Endothelial cell of umbilical vein (primary cell): ENCODE measurements at regions of chr1 and their contacts with region 1.

Region 1: DNA sequence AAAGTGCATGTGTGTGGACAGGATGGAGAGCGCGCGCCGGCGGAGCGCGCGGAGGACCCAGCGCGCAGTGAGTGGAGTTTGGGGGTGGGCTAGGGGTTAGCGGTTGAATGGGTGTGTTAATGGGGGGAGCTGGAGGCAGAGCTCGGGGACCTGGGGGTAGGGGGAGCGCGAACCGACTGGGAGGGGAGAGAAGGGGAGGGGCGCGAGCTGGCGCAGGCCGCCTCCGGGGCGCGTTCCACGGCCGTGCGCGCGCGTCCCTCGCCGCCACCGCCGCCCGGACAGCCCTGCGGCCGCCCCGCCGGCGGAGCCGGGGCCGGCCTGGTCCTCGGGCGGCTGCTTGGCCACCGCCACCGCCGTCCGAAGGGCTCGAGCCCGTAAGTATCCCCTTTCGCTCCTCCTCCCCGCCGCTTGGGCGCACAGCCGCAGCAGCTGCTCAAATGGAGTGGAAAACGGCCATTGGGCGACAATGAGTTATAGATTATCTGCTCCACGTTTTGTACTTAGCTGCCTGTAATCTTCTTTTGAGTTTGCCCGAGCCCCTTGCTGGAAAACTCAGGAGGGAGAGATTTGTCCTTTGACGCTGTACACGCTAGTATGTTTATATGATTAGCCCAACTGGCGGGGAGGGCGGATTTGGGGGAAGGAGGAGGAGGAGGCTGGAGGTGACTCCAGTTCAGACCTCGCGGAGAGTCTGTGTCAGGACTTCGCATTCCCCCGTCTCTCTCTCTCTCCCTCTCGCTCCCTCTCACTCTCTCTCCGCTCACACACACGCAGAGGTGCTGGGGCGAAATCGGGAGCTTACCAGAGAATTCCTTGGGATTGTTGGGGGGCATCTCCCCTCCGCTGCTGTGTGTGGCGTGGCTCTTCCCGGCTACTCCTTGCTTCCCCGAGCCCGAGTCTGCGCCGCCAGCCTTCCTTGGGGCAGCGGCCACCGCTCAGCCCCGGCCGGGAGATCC is at the start of gene ADGRL2:
- DNase-seq: peak; percentile 91
- H3K4me3 ChIP-seq: peak within 1 kb of the TSS; percentile 71 to 99 (median 89)
- H3K27ac ChIP-seq: peak within 1 kb of the TSS; percentile 79
- H3K4me1 ChIP-seq: peaks cover 10% of the 10 kb centered on the region
- H3K27me3 ChIP-seq: no peaks in the 10 kb centered on the region
- CTCF ChIP-seq: no peak
- POLR2A ChIP-seq: no peak
- total RNA-seq, gene ADGRL2: 40.0 and 46.1 TPM in 2 replicates

Region 2: DNA sequence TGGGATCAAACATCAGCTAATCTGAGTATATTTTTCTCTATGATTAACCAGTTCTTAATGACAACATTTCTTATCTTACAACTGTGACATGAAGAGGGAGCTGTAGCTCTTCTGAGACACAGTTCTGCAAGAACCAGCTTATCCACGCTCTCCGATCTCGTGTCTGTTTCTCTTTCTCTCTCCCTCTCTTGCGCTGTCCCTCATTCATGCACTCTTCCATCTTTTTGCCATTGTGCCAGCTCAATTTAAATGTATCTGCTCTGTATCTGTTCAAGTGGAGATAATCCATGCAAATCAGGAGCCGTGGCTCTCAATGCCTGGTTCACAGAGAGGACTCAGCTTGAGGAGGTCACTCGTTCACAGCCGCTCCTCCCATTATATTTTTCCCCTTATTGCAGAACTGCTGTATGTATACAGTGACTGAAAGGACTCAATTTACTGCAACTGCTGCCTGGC is 494.9 kb before region 1 on chr1:
- CTCF ChIA-PET with region 1: interaction called, 9 read pairs
- POLR2A ChIA-PET with region 1: no interaction called
- dilution Hi-C with region 1: no loop called
- intact Hi-C with region 1: loop called (anchors 1 kb)
- DNase-seq: peak; percentile 65
- H3K4me3 ChIP-seq: peak overlapping the region; percentile 42 to 75 (median 47)
- H3K27ac ChIP-seq: no peak overlapping the region
- H3K4me1 ChIP-seq: no peaks in the 10 kb centered on the region
- H3K27me3 ChIP-seq: peaks cover 0 to 4% of the 10 kb centered on the region in 2 experiments
- CTCF ChIP-seq: peak; percentile 15 to 28
- POLR2A ChIP-seq: no peak

Region 3: DNA sequence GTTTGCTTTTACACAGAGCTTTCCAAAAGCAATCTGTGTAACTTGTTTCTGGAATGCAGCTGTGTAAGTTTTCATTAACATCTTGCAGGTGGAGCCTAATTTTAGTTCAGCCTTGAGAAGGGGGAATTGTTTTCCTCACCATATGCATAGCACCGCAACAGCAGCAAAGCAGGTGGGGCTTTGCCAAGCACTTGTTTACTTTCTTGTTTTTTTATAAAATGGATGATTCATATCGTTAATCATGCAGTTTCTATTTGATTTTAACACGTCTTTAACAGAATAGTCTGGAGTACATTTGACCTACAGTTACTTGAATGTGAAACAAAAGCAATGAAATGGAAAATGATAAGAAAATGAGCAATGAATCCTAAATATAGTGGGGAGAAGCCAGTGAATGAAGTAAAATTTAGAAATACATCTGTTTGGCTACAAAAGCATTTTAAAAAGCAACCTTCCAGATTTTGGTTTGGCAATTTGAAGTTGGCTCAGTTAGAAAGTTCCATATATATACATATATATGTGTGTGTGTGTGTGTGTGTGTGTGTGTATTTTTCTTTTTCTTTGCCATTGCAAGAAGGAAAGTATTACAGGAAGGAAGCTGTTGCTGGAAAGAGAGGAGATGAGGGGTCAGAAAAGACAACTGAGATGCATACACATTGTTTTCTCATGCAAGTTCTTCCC is 119.2 kb before region 1 on chr1:
- CTCF ChIA-PET with region 1: interaction called, 3 read pairs
- POLR2A ChIA-PET with region 1: no interaction called
- dilution Hi-C with region 1: no loop called
- intact Hi-C with region 1: loop called (anchors 1 kb)
- DNase-seq: peak; percentile 92
- H3K4me3 ChIP-seq: peak overlapping the region in 1 of 3 experiments; percentile 34
- H3K27ac ChIP-seq: peak overlapping the region; percentile 50
- H3K4me1 ChIP-seq: peaks cover 24% of the 10 kb centered on the region
- H3K27me3 ChIP-seq: no peaks in the 10 kb centered on the region
- CTCF ChIP-seq: no peak
- POLR2A ChIP-seq: no peak

Region 4: GRCh38 chr1:81998165-81998564 is 197.2 kb after region 1 on chr1:
- CTCF ChIA-PET with region 1: interaction called, 4 read pairs
- POLR2A ChIA-PET with region 1: no interaction called
- dilution Hi-C with region 1: no loop called
- intact Hi-C with region 1: loop called (anchors 5 kb)
- DNase-seq: no peak
- H3K4me3 ChIP-seq: no peak overlapping the region
- H3K27ac ChIP-seq: no peak overlapping the region
- H3K4me1 ChIP-seq: no peaks in the 10 kb centered on the region
- H3K27me3 ChIP-seq: no peaks in the 10 kb centered on the region
- CTCF ChIP-seq: no peak
- POLR2A ChIP-seq: no peak

Region 5: GRCh38 chr1:82185084-82185483 is 384.1 kb after region 1 on chr1:
- CTCF ChIA-PET with region 1: no interaction called
- POLR2A ChIA-PET with region 1: no interaction called
- dilution Hi-C with region 1: no loop called
- intact Hi-C with region 1: no loop called
- DNase-seq: no peak
- H3K4me3 ChIP-seq: no peak overlapping the region
- H3K27ac ChIP-seq: no peak overlapping the region
- H3K4me1 ChIP-seq: no peaks in the 10 kb centered on the region
- H3K27me3 ChIP-seq: no peaks in the 10 kb centered on the region
- CTCF ChIP-seq: no peak
- POLR2A ChIP-seq: no peak

Region 6: GRCh38 chr1:82704393-82704792 is 903.4 kb after region 1 on chr1:
- CTCF ChIA-PET with region 1: no interaction called
- POLR2A ChIA-PET with region 1: no interaction called
- dilution Hi-C with region 1: no loop called
- intact Hi-C with region 1: loop called (anchors 1 kb)
- DNase-seq: peak; percentile 98
- H3K4me3 ChIP-seq: no peak overlapping the region
- H3K27ac ChIP-seq: peak overlapping the region; percentile 77
- H3K4me1 ChIP-seq: peaks cover 30% of the 10 kb centered on the region
- H3K27me3 ChIP-seq: no peaks in the 10 kb centered on the region
- CTCF ChIP-seq: no peak
- POLR2A ChIP-seq: peak; percentile 80

Region 7: GRCh38 chr1:82920418-82921248 is 1119.7 kb after region 1 on chr1:
- CTCF ChIA-PET with region 1: no interaction called
- POLR2A ChIA-PET with region 1: no interaction called
- dilution Hi-C with region 1: no loop called
- intact Hi-C with region 1: loop called (anchors 2 kb)
- DNase-seq: peak; percentile 89
- H3K4me3 ChIP-seq: no peak overlapping the region
- H3K27ac ChIP-seq: peak overlapping the region; percentile 35
- H3K4me1 ChIP-seq: peaks cover 23% of the 10 kb centered on the region
- H3K27me3 ChIP-seq: peaks cover 16 to 25% of the 10 kb centered on the region in 2 experiments
- CTCF ChIP-seq: no peak
- POLR2A ChIP-seq: no peak